ENCODE measurements at regions of chr17 and their contacts with region 1.

Region 1: GRCh38 chr17:64420143-64420971 is 28.6 kb upstream of the MILR1 start:
- DNase-seq: no peak
- ATAC-seq: peak; percentile 90

Region 2: GRCh38 chr17:64306850-64307463 is 113.4 kb before region 1 on chr17:
- intact Hi-C with region 1: loop called in 1 of 2 experiments (anchors 5 kb)
- DNase-seq: peak in 1 of 2 donors; percentile 75
- ATAC-seq: peak; percentile 46

Region 3: GRCh38 chr17:64320613-64321553 is 99.5 kb before region 1 on chr17:
- intact Hi-C with region 1: loop called (anchors 5 to 10 kb)
- DNase-seq: peak in 1 of 2 donors; percentile 49
- ATAC-seq: peak; percentile 65

Region 4: DNA sequence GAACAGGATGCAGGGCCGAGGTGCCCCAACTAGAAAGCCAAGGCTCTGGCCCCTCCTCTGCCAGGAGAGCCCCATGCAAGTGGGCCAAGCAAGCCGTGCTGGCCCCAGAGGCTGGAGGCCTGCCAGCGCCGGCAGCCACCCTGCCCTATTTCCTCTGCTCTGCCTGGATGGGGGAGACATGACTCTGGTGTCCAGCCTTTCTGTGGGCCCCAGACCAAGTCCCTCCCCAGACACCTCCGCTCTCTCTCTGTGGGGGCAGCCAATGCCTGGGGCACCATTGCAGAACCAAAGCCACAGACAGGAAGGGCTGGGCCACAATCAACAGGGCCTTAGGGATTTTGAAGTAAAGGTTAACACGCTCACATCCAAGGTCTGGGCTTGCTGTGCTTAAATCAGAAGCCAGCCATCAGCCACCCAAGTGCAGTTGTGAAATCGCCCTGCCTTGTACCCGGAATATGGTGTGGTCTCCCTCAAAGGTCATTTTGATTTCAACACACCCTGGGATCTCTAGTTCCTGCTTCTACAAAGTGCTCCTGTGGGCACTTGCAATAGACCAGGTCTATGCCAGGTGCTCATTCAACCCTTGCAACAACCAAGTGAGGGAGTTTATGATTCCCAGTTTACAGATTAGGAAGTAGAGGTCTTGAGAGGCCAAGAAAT is 93.8 kb before region 1 on chr17:
- intact Hi-C with region 1: loop called (anchors 5 to 10 kb)
- DNase-seq: no peak
- ATAC-seq: no peak

Region 5: DNA sequence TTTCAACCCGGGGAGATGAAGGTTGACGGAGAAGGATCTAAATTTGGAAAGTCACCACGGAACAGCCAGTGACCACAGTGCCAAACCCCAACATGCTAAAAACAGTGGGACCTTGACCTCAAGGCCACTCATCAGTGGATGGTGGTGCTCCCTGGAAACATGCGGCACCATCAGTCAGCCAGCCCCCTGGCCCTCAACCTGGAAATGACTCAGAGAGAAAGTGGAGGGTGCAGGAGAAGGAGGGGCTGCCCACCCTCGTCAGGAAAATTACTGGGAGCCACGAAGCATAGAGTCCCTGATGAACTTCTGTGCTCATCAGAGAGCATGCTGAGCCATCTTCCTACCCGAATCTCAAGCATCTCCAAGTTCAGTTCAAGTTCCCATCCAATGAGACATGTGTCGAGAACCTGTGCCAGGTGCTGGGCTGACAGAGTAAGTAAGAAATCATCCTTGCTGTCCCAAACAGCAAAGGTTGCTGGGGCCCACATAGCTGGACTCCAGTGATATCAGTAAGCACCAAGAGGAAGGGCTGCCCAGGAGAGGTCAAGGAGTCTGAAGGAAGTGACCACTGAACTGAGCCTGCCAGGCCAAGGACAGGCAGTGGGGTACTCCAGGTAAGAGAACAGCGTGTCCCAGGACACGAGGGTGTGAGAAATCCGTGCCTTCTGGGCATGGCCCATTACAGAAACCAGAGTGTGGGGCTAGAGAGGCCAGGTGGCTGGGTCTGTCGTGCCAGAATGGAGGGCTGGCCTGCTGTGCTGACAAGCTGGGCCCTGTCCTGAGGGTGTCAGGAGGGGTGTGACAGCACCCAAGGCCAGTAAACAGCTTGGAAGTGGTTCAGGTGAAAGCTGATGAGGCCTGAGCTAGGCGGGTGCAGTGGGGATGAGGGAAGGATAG is 34.9 kb before region 1 on chr17:
- intact Hi-C with region 1: no loop called
- DNase-seq: peak in 1 of 2 donors; percentile 56
- ATAC-seq: no peak

Region 6: DNA sequence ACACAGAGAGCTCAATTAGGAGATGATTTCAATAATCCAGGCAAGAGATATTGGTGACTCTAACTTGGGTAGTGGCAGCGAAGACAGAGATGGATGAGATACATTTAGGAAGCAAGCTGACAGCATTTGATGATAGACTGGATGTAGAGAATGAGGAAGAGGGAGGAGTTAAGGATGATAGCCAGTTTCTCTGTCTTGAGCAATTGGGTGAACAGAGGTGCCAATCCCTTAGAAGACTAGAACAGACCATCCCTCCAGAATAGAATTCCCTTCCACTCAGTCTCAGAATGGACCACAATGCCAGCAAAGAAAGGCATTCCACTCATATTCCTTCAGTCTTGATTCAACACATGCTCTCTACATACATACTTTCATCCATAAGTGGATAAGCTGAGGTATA is 59.3 kb after region 1 on chr17:
- intact Hi-C with region 1: loop called in 1 of 2 experiments (anchors 10 kb)
- DNase-seq: no peak
- ATAC-seq: no peak

Region 7: GRCh38 chr17:64496786-64497564 is 76.6 kb after region 1 on chr17 and contains the start of gene POLG2:
- intact Hi-C with region 1: loop called in 1 of 2 experiments (anchors 10 kb)
- DNase-seq: peak; percentile 93 to 97
- ATAC-seq: peak; percentile 93
- total RNA-seq, gene POLG2: 9.4 to 10.4 TPM

Region 8: DNA sequence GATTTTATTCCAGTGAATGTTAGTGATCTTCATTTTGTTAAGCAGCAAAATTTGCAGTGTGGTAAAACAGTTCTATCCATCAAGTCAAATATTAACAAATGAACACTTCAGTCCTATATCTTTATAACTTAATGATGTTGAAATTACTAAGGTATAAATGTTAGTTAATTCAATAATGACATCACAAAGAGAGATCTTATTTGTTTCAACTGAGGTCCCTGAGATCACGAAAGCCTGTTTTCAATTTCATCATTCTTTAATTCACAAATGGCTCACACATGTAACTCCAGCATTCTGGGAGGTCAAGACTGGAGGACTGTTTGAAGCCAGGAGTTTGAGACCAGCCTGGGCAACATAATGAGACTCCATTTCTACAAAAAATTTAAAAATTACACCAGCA is 227.9 kb after region 1 on chr17:
- intact Hi-C with region 1: loop called in 1 of 2 experiments (anchors 10 kb)
- DNase-seq: no peak
- ATAC-seq: no peak